ENCODE measurements at regions of chr6 and their contacts with region 1.

Region 1: GRCh38 chr6:151765444-151765886 is 42.0 kb upstream of the ESR1 start:
- DNase-seq: no peak
- ATAC-seq: peak; percentile 61 to 81
- H3K4me3 ChIP-seq: no peak overlapping the region
- H3K27ac ChIP-seq: no peak overlapping the region
- H3K4me1 ChIP-seq: no peaks in the 10 kb centered on the region
- H3K27me3 ChIP-seq: no peaks in the 10 kb centered on the region

Region 2: GRCh38 chr6:151690768-151691562 is 74.5 kb before region 1 on chr6:
- intact Hi-C with region 1: loop called in 1 of 4 experiments (anchors 10 kb)
- DNase-seq: no peak
- ATAC-seq: peak; percentile 70 to 84
- H3K4me3 ChIP-seq: peak overlapping the region; percentile 71
- H3K27ac ChIP-seq: peak overlapping the region; percentile 52
- H3K4me1 ChIP-seq: no peaks in the 10 kb centered on the region
- H3K27me3 ChIP-seq: no peaks in the 10 kb centered on the region

Region 3: DNA sequence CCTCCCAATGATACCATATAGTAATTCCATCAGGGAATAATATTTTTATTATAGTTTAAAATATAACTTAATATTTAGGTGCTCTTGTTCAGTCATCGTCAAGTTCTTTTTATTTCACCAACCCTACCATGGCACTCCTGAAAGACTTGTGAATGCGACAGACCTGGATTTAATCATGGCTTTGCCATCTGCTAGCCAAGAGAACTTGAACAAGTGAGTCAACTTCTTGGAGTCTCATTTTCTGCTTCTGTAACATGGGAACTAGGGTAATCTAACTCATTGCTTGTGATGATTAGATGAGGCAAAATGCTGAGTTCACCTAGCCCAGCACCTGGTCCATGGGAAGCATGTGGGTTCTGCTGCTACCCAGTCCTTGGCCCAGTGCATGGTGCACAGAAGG is 104.9 kb after region 1 on chr6:
- intact Hi-C with region 1: no loop called
- DNase-seq: no peak
- ATAC-seq: no peak
- H3K4me3 ChIP-seq: no peak overlapping the region
- H3K27ac ChIP-seq: no peak overlapping the region
- H3K4me1 ChIP-seq: no peaks in the 10 kb centered on the region
- H3K27me3 ChIP-seq: no peaks in the 10 kb centered on the region

Region 4: DNA sequence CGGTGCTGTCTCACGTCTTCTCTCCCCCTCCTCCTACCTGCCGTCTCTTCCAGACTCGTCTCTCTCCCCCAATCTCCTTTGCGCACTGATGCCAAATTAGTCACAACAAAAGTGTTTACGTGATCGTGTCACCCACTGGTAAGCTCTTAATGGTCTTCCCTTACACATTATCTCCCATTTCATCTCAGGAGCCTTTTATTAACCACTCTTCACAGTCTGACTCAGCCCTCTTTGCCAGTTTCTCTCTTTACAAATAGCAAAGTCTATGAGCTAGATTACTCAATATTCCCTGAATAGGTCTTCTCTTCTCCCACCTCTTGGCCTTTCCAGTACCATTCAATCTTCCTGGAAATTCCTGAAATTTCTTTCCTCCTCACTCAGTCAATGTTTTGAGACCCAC is 289.0 kb after region 1 on chr6:
- intact Hi-C with region 1: no loop called
- DNase-seq: no peak
- ATAC-seq: no peak
- H3K4me3 ChIP-seq: no peak overlapping the region
- H3K27ac ChIP-seq: no peak overlapping the region
- H3K4me1 ChIP-seq: no peaks in the 10 kb centered on the region
- H3K27me3 ChIP-seq: no peaks in the 10 kb centered on the region

Region 5: GRCh38 chr6:152124429-152125074 is 359.1 kb after region 1 on chr6:
- intact Hi-C with region 1: loop called (anchors 5 to 10 kb)
- DNase-seq: no peak
- ATAC-seq: peak in 1 of 2 donors; percentile 48
- H3K4me3 ChIP-seq: no peak overlapping the region
- H3K27ac ChIP-seq: no peak overlapping the region
- H3K4me1 ChIP-seq: peaks cover 4% of the 10 kb centered on the region
- H3K27me3 ChIP-seq: no peaks in the 10 kb centered on the region

Measured in right cardiac atrium (tissue), 5 donors.